Activated B cell treated with CpG ODN at 0.5 μM for 24 hours (primary cell): ENCODE measurements at regions of chr10 and their contacts with region 1.

Region 1: GRCh38 chr10:102917962-102918816 is at the start of gene CNNM2:
- DNase-seq: peak; percentile 96
- ATAC-seq: peak; percentile 89
- H3K4me3 Mint-ChIP-seq: peak within 1 kb of the TSS; percentile 96
- H3K27ac Mint-ChIP-seq: peak within 1 kb of the TSS; percentile 93
- H3K4me1 Mint-ChIP-seq: peaks cover 45% of the 10 kb centered on the region
- H3K27me3 Mint-ChIP-seq: peaks cover 10% of the 10 kb centered on the region
- CTCF ChIP-seq: no peak
- total RNA-seq, gene CNNM2: 5.5 and 7.3 TPM in 2 replicates

Region 2: GRCh38 chr10:102729029-102730026 is 188.9 kb before region 1 on chr10:
- CTCF ChIA-PET with region 1: interaction called, 4 read pairs
- POLR2A ChIA-PET with region 1: no interaction called
- intact Hi-C with region 1: loop called (anchors 1 kb)
- DNase-seq: peak; percentile 37
- ATAC-seq: peak; percentile 78
- H3K4me3 Mint-ChIP-seq: no peak overlapping the region
- H3K27ac Mint-ChIP-seq: no peak overlapping the region
- H3K4me1 Mint-ChIP-seq: no peaks in the 10 kb centered on the region
- H3K27me3 Mint-ChIP-seq: no peaks in the 10 kb centered on the region
- CTCF ChIP-seq: no peak

Region 3: GRCh38 chr10:102853944-102854694 is 64.1 kb before region 1 on chr10 and contains the start of gene BORCS7:
- CTCF ChIA-PET with region 1: no interaction called
- POLR2A ChIA-PET with region 1: no interaction called
- intact Hi-C with region 1: loop called (anchors 1 kb)
- DNase-seq: peak; percentile 72
- ATAC-seq: peak; percentile 99
- H3K4me3 Mint-ChIP-seq: peak within 1 kb of the TSS; percentile 97
- H3K27ac Mint-ChIP-seq: peak within 1 kb of the TSS; percentile 98
- H3K4me1 Mint-ChIP-seq: peaks cover 19% of the 10 kb centered on the region
- H3K27me3 Mint-ChIP-seq: no peaks in the 10 kb centered on the region
- CTCF ChIP-seq: no peak
- total RNA-seq, gene BORCS7: 12.1 and 17.4 TPM in 2 replicates

Region 4: GRCh38 chr10:103192451-103193106 is 274.4 kb after region 1 on chr10:
- CTCF ChIA-PET with region 1: interaction called, 3 read pairs
- POLR2A ChIA-PET with region 1: interaction called, 8 read pairs
- intact Hi-C with region 1: loop called (anchors 1 kb)
- DNase-seq: peak; percentile 59
- ATAC-seq: peak; percentile 47
- H3K4me3 Mint-ChIP-seq: peak overlapping the region; percentile 99
- H3K27ac Mint-ChIP-seq: peak overlapping the region; percentile 96
- H3K4me1 Mint-ChIP-seq: peaks cover 47% of the 10 kb centered on the region
- H3K27me3 Mint-ChIP-seq: no peaks in the 10 kb centered on the region
- CTCF ChIP-seq: no peak

Region 5: GRCh38 chr10:103333925-103334520 is 415.8 kb after region 1 on chr10:
- CTCF ChIA-PET with region 1: interaction called, 20 read pairs
- POLR2A ChIA-PET with region 1: interaction called, 3 read pairs
- intact Hi-C with region 1: loop called (anchors 1 kb)
- DNase-seq: no peak
- ATAC-seq: no peak
- H3K4me3 Mint-ChIP-seq: no peak overlapping the region
- H3K27ac Mint-ChIP-seq: no peak overlapping the region
- H3K4me1 Mint-ChIP-seq: no peaks in the 10 kb centered on the region
- H3K27me3 Mint-ChIP-seq: no peaks in the 10 kb centered on the region
- CTCF ChIP-seq: no peak

Region 6: GRCh38 chr10:103396064-103396788 is 478.0 kb after region 1 on chr10 and contains the starts of genes ATP5MK and PDCD11:
- CTCF ChIA-PET with region 1: no interaction called
- POLR2A ChIA-PET with region 1: no interaction called
- intact Hi-C with region 1: loop called (anchors 1 kb)
- DNase-seq: peak; percentile 88
- ATAC-seq: peak; percentile 98
- H3K4me3 Mint-ChIP-seq: peak within 1 kb of the TSS; percentile 98
- H3K27ac Mint-ChIP-seq: peak within 1 kb of the TSS; percentile 91
- H3K4me1 Mint-ChIP-seq: peaks cover 47% of the 10 kb centered on the region
- H3K27me3 Mint-ChIP-seq: no peaks in the 10 kb centered on the region
- CTCF ChIP-seq: no peak
- total RNA-seq, gene ATP5MK: 208 and 223 TPM in 2 replicates
- total RNA-seq, gene PDCD11: 65.4 and 66.0 TPM in 2 replicates

Region 7: GRCh38 chr10:104784452-104784851 is 1866.3 kb after region 1 on chr10:
- CTCF ChIA-PET with region 1: no interaction called
- POLR2A ChIA-PET with region 1: no interaction called
- intact Hi-C with region 1: no loop called
- DNase-seq: no peak
- ATAC-seq: no peak
- H3K4me3 Mint-ChIP-seq: no peak overlapping the region
- H3K27ac Mint-ChIP-seq: no peak overlapping the region
- H3K4me1 Mint-ChIP-seq: no peaks in the 10 kb centered on the region
- H3K27me3 Mint-ChIP-seq: peaks cover 3% of the 10 kb centered on the region
- CTCF ChIP-seq: no peak